Activated CD8-positive, alpha-beta memory T cell treated with anti-CD3 and anti-CD28 coated beads, Interleukin-2, amount 10 ng/mL, durations not matched to agents 7 days and 5 days (primary cell): ENCODE measurements at regions of chr4 and their contacts with region 1.

Region 1: GRCh38 chr4:153344131-153345010 is at the start of gene MND1:
- DNase-seq: peak; percentile 94
- ATAC-seq: peak; percentile 96
- H3K4me3 Mint-ChIP-seq: peak within 1 kb of the TSS; percentile 85
- H3K27ac Mint-ChIP-seq: peak within 1 kb of the TSS; percentile 90
- H3K4me1 Mint-ChIP-seq: peaks cover 41% of the 10 kb centered on the region
- H3K27me3 Mint-ChIP-seq: peaks cover 33% of the 10 kb centered on the region
- total RNA-seq, gene MND1: 25.2 to 33.6 TPM

Region 2: GRCh38 chr4:153090670-153091385 is 253.5 kb before region 1 on chr4:
- CTCF ChIA-PET with region 1: no interaction called
- DNase-seq: no peak
- ATAC-seq: no peak
- H3K4me3 Mint-ChIP-seq: no peak overlapping the region
- H3K27ac Mint-ChIP-seq: no peak overlapping the region
- H3K4me1 Mint-ChIP-seq: no peaks in the 10 kb centered on the region
- H3K27me3 Mint-ChIP-seq: peaks cover 26% of the 10 kb centered on the region

Region 3: DNA sequence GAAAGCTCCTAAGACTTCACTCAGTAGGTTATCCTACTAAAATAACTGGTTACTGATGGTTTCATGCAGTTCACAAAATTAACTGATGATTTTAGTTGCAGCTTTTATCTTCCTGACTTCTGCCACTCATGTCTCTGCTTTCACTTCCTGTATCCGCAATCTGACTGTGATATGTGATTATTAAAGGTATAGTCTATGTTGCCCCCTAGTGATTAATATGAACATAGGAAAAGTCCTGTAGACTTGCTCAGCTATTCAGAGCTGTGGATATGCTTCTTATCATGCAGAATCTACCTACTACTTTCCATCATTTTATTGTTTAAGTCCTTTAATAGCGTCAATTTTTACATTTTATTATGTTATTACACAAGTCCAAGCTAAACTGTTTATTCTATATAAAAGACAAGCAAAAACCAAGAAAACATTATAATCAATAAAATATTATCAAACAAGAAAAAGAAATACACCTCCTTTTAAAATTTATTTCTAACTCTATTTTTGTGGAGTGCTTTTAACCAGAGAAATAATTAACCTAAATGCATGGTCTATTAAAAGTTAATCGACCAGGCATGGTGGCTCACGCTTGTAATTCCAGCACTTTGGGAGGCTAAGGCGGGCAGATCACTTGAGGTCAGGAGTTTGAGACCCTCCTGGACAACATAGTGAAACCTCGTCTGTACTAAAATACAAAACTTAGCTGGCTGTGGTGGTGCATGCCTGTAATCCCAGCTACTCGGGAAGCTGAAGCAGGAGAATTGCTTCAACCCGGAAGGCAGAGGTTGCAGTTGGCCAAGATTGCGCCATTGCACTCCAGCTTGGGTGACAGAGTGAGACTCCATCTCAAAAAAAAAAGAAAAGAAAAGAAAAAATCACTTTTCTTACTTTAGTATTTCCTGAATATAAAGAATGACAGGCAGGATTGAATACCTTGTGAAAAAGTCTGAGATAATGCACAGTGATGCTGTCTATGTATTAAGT is 299.3 kb after region 1 on chr4:
- CTCF ChIA-PET with region 1: interaction called, 71 read pairs
- DNase-seq: no peak
- ATAC-seq: peak; percentile 93
- H3K4me3 Mint-ChIP-seq: no peak overlapping the region
- H3K27ac Mint-ChIP-seq: peak overlapping the region; percentile 59
- H3K4me1 Mint-ChIP-seq: peaks cover 14% of the 10 kb centered on the region
- H3K27me3 Mint-ChIP-seq: no peaks in the 10 kb centered on the region